ENCODE measurements at regions of chr15 and their contacts with region 1.

Region 1: DNA sequence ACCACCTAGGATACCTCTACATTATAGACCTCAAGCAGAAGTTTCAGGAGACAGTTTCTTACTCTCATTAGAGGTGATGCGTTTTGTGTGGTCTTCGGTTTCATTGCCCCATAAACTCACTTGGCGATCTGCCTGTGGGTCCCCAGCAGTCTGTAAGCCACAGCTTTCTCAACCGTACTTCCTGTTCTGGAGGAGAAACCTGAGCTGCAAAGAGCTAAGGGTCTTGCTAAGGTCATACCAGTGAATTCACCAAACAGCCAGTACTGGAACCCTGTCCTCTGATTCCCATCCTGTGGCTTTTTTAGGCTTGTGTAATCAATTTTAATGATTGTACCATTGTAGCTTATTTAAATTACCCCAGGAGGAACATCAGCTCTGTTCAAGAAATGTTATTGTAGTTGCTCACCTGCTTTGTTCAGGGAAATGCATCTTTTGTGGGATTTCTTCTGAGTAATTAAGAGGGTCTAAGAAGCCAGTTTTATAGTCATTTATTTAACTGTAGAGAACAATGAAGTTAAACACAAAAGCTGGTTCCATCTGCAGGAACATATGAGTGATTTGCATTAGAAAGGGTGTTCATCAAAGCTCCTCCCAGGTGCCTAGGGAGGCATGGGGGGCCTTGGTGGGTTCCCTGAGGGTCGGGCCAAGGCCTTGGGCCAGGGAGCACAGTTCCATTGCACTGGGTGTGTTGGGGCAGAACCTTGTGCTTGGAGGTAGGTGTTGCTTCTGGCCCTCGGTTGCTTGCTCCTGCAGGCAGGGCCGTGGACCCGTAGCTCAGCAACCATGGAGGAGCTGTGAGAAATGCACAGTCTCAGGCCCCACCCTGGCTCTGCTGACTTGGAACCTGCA is 69.6 kb downstream of the APBA2 start:
- DNase-seq: peak in 1 of 6 donors; percentile 32
- ATAC-seq: no peak
- H3K4me3 ChIP-seq: no peak overlapping the region
- H3K27ac ChIP-seq: no peak overlapping the region
- H3K4me1 ChIP-seq: no peaks in the 10 kb centered on the region
- H3K27me3 ChIP-seq: no peaks in the 10 kb centered on the region
- CTCF ChIP-seq: no peak

Region 2: DNA sequence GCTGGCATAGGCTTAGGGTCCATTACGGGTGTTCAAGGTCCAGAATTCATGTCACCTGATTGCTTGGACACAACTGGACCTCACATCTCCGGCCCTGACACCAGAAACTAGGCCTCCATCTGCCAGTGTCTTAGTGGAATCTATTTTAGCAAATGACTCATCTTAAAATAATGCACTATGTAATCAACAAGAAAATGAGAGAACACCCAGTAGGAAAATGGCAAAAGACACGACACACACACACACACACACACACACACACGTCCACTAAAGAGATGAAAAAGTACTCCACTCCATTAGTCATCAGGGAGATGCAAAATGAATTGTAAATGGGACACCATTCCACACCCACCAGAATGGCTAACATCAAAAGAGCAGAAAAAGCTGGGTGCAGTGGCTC is 58.4 kb before region 1 on chr15:
- intact Hi-C with region 1: loop called in 1 of 3 experiments (anchors 10 kb)
- DNase-seq: no peak
- ATAC-seq: peak in 1 of 4 donors; percentile 17
- H3K4me3 ChIP-seq: no peak overlapping the region
- H3K27ac ChIP-seq: no peak overlapping the region
- H3K4me1 ChIP-seq: peaks cover 0 to 3% (median 0%) of the 10 kb centered on the region in 3 donors
- H3K27me3 ChIP-seq: no peaks in the 10 kb centered on the region
- CTCF ChIP-seq: no peak

Region 3: DNA sequence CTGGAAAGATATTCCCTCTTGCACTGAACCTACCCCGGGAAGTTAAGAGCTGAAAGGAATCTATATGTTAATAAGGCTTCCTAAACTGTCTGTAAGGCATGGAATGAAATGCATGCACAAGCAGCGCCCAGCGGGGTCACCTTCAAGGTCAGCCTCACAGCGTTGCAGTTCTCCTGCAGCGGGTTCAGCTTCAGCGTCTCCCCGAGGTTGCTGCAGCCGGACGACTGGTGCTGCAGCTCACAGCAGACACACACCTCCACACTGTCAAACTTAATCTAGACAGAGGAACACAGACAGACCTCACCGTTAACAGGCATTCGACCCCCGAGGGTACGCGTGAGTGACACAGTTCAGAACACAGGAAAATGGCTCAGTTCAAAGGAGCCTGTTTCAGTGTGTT is 240.9 kb after region 1 on chr15:
- intact Hi-C with region 1: no loop called
- DNase-seq: no peak
- ATAC-seq: no peak
- H3K4me3 ChIP-seq: no peak overlapping the region
- H3K27ac ChIP-seq: no peak overlapping the region
- H3K4me1 ChIP-seq: no peaks in the 10 kb centered on the region
- H3K27me3 ChIP-seq: no peaks in the 10 kb centered on the region
- CTCF ChIP-seq: no peak